ENCODE measurements at regions of chr4 and their contacts with region 1.

Region 1: GRCh38 chr4:56712049-56712448 is 31.0 kb upstream of the HOPX start:
- DNase-seq: no peak
- H3K4me3 ChIP-seq: no peak overlapping the region
- H3K27ac ChIP-seq: no peak overlapping the region
- H3K4me1 ChIP-seq: no peaks in the 10 kb centered on the region
- H3K27me3 ChIP-seq: no peaks in the 10 kb centered on the region
- CTCF ChIP-seq: no peak

Region 2: GRCh38 chr4:56674984-56675383 is 37.1 kb before region 1 on chr4:
- CTCF ChIA-PET with region 1: no interaction called
- dilution Hi-C with region 1: loop called (anchors 5 kb)
- in situ Hi-C with region 1: no loop called
- intact Hi-C with region 1: no loop called
- DNase-seq: no peak
- H3K4me3 ChIP-seq: no peak overlapping the region
- H3K27ac ChIP-seq: no peak overlapping the region
- H3K4me1 ChIP-seq: no peaks in the 10 kb centered on the region
- H3K27me3 ChIP-seq: peaks cover 9% of the 10 kb centered on the region
- CTCF ChIP-seq: no peak